ENCODE measurements at regions of chr19 and their contacts with region 1.

Region 1: DNA sequence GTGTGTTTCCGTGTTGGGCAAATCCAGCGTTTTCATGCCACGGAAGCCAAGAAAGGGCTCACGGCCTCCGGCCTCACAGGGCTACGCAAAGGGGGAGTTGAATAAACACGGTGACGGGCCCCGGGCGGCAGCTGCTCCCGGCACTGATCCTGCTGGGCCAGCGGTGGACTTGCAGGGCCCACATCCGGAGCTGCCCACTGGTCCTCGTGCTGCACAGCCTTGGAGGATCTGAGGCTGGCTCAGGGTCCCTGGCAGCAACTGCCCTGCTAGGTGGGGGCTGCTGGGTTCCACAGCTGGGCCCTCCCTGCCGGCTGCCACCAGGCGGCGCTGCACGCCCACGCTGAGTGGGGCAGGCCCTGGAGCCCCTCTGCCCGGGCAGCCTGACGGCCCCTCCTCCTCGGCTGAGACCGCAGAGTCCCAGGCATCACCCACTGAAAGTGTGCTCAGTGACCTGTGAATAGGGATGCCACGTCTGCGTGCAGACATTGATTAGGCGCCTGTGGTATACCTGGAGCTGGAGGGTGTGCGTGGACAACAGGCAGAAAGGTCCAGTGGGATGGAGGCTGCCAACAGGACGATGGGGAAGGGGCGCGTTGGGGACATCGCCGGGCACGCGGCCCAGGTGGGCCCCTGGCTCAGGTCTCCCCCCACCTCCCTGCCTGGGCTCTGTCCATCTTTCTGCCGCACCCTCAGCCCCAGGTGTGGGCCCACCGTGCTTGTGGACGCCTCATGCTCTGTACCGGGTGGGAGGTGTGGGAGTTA is 5.3 kb upstream of the HCN2 start:
- DNase-seq: peak; percentile 81
- CTCF ChIP-seq: peak; percentile 89

Region 2: DNA sequence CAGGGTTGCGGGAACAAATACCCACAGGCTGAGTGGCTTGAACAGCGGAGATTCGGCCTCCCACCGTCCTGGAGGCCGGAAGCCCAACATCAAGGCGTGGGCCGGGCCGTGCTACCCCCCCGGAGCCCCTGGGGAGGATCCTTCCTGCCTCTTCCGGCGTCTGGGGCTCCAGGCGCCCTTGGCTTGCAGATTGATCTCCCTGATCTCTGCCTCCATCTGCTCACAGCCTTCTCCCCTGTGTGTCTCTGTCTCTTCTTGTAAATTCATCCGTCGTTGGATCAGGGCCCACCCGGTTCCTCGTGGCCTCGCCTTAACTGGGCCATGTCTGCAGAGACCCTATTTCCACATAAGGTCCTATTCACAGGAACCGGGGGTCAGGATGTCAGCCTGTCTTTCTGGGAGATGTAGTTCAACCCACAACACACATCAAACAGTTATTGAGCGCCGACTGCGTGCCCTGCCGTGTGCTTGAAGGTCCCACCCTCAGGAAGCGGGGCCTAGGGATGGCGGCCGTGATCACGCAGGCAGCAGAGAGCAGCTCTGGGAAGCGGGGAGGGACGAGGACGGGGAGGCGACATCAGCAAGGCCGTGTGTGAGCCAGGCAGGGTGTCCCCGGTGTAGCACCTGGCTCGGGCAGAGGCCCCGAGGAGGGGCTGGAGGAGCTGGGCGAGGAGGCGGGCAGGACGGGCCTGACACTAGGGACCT is 26.5 kb after region 1 on chr19:
- CTCF ChIA-PET with region 1: interaction called, 12 read pairs
- POLR2A ChIA-PET with region 1: no interaction called
- DNase-seq: peak; percentile 67
- CTCF ChIP-seq: no peak

Region 3: GRCh38 chr19:621819-622218 is 37.4 kb after region 1 on chr19:
- CTCF ChIA-PET with region 1: no interaction called
- POLR2A ChIA-PET with region 1: no interaction called
- DNase-seq: no peak
- CTCF ChIP-seq: no peak

Region 4: DNA sequence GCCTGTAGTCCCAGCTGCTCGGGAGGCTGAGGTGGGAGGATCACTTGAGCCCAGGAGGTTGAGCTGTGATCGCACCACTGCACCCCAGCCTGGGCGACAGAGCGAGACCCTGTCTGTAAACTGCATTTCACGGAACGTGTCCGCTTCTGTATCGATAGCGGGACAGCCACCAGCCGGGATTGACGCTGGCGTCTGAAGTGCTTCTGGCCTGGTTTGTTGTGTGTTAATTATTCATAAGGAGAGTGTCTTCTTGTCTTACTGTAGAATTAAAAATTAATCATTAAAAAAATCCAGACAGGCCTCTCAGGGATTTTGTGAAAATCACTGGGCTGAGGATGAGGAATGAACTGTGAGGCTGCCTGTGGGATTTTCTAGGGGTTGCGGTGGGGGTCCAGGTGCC is 150.3 kb after region 1 on chr19:
- CTCF ChIA-PET with region 1: interaction called, 11 read pairs
- POLR2A ChIA-PET with region 1: no interaction called
- DNase-seq: no peak
- CTCF ChIP-seq: no peak

Measured in GM10248 (cell line).